ENCODE measurements at regions of chr12 and their contacts with region 1.

Region 1: DNA sequence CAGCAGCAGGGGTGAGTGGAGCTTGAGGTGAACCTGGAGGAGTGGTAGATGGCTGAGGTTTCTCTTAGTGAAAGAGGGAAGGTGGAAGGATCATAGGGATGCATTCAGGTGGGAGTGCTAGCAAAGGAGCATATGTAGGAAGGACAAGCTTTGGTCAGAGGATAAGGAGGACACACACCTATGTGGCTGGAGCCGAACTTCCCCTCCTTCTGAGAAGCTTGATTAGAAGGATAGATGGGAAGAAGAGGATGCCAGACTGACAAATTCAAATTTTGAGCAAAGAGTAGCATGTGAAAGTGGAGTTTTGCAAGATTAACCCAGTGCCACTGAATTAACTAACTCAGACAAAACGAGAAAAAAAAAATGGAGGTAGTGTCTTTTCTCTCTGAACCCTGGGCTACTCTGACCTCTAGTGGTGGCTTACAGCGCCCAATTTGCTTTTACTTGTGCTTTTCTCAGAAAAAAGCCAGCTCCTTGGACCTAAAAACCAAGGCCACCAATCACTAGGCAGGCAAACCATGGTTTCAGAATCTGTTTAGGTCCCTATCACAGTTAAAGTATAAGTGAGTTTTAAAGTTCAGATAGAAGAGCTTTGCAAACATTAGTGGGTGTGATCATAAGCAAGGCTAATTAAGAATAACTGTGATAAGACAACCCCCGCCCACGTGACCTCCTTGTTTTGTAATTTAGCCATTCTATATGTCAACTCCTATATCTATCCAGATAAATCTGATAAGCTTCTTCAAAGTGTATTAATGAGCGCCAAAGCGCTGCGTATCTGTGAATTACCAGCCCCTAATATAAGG is 15.5 kb downstream of the EMP1 start:
- DNase-seq: peak; percentile 84
- ATAC-seq: peak; percentile 68
- H3K4me3 Mint-ChIP-seq: no peak overlapping the region
- H3K27ac Mint-ChIP-seq: peak overlapping the region; percentile 9
- H3K4me1 Mint-ChIP-seq: peaks cover 19% of the 10 kb centered on the region
- H3K27me3 Mint-ChIP-seq: peaks cover 3% of the 10 kb centered on the region
- CTCF ChIP-seq: peak; percentile 93

Region 2: GRCh38 chr12:12916135-12916944 is 295.7 kb before region 1 on chr12:
- CTCF ChIA-PET with region 1: interaction called, 94 read pairs
- POLR2A ChIA-PET with region 1: no interaction called
- intact Hi-C with region 1: loop called (anchors 2 kb)
- DNase-seq: peak; percentile 92
- ATAC-seq: peak; percentile 98
- H3K4me3 Mint-ChIP-seq: no peak overlapping the region
- H3K27ac Mint-ChIP-seq: no peak overlapping the region
- H3K4me1 Mint-ChIP-seq: peaks cover 7% of the 10 kb centered on the region
- H3K27me3 Mint-ChIP-seq: peaks cover 12% of the 10 kb centered on the region
- CTCF ChIP-seq: peak; percentile 89

Region 3: DNA sequence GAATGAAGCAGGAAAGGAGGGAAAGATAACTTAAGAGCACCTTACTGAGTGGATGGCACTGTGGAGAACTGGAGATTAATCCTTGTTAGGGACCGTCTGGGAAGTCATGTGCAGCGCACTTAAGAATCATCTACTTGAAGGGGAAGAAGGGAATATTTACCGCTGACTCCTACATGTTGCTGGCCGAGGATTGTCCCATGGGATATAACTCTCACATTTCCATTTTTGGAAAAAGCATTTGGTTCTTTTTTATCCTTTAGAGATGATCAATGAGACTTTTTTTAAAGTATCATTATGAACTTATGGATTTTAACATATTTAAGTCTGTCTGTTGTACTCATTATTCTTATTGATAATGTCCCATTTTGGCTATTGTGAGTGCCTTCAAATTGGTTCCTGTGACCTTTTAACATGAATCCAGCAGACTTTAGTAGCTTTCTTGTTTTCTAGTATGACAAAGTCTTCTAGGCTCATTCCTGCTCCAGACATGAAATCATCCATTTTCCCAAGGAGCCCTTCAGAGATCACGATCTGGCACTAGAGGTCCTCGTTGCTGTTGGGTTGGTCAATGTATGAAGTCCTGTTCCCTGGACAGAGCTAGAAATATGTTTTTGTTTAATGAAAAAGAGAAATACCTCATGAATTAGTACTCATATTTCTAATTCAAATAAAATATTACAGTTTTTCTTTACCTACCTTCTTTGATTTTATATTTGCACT is 188.1 kb before region 1 on chr12:
- CTCF ChIA-PET with region 1: interaction called, 12 read pairs
- POLR2A ChIA-PET with region 1: no interaction called
- intact Hi-C with region 1: no loop called
- DNase-seq: no peak
- ATAC-seq: no peak
- H3K4me3 Mint-ChIP-seq: no peak overlapping the region
- H3K27ac Mint-ChIP-seq: no peak overlapping the region
- H3K4me1 Mint-ChIP-seq: no peaks in the 10 kb centered on the region
- H3K27me3 Mint-ChIP-seq: peaks cover 4% of the 10 kb centered on the region
- CTCF ChIP-seq: no peak

Region 4: GRCh38 chr12:13085968-13086686 is 125.9 kb before region 1 on chr12:
- CTCF ChIA-PET with region 1: interaction called, 13 read pairs
- POLR2A ChIA-PET with region 1: interaction called, 3 read pairs
- intact Hi-C with region 1: no loop called
- DNase-seq: no peak
- ATAC-seq: no peak
- H3K4me3 Mint-ChIP-seq: no peak overlapping the region
- H3K27ac Mint-ChIP-seq: no peak overlapping the region
- H3K4me1 Mint-ChIP-seq: peaks cover 8% of the 10 kb centered on the region
- H3K27me3 Mint-ChIP-seq: no peaks in the 10 kb centered on the region
- CTCF ChIP-seq: no peak

Region 5: DNA sequence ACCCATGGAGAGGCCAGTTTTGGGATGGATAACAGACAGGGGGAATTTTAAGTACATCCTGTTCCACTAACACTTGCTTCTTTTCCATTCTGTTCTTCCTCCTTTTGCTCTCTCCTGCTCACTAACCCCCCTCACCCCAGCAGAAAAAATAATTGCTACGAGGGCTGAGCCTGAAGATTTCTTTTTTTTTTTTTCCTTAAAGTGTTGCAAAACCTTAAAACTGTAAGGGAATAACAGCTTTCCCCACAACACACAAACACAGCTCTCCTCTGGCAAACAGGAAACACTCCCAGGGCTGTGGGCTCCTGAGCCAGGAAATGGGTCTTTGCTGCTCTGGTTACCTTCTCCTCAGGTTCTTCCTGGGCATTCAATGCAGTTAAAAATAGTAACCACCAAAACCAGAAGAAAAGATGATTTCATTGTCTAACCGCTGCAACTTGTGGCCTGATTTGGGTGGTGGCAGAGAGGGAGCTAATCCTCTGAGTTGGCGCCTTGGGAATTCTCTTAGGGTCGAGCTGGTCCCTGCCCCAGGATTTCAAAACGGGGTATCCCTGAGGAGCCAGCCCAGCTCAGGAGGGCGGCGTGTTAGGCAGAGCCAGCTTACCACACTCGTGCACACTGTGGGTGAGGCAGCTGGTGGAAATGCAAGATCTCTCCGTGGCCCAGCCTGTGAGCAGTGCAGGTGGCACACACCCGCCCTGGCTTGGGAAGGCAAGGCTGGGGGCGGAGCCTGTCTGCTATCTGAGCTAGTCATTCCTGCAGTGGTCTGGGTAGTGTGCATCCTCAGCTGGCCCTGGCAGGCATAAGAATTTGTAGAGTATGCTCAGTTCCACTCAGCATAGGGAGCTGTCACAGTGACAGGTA is 32.6 kb before region 1 on chr12:
- CTCF ChIA-PET with region 1: interaction called, 12 read pairs
- POLR2A ChIA-PET with region 1: interaction called, 3 read pairs
- intact Hi-C with region 1: no loop called
- DNase-seq: peak; percentile 82
- ATAC-seq: peak; percentile 97
- H3K4me3 Mint-ChIP-seq: peak overlapping the region; percentile 49
- H3K27ac Mint-ChIP-seq: no peak overlapping the region
- H3K4me1 Mint-ChIP-seq: peaks cover 16% of the 10 kb centered on the region
- H3K27me3 Mint-ChIP-seq: peaks cover 6% of the 10 kb centered on the region
- CTCF ChIP-seq: no peak

Region 6: GRCh38 chr12:13233830-13234641 is 22.0 kb after region 1 on chr12:
- CTCF ChIA-PET with region 1: interaction called, 22 read pairs
- POLR2A ChIA-PET with region 1: no interaction called
- intact Hi-C with region 1: no loop called
- DNase-seq: peak; percentile 57
- ATAC-seq: peak; percentile 78
- H3K4me3 Mint-ChIP-seq: no peak overlapping the region
- H3K27ac Mint-ChIP-seq: no peak overlapping the region
- H3K4me1 Mint-ChIP-seq: no peaks in the 10 kb centered on the region
- H3K27me3 Mint-ChIP-seq: peaks cover 4% of the 10 kb centered on the region
- CTCF ChIP-seq: peak; percentile 71

Measured in activated CD8-positive, alpha-beta T cell treated with anti-CD3 and anti-CD28 coated beads for 36 hours (primary cell).